ENCODE measurements at regions of chrX and their contacts with region 1.

Region 1: DNA sequence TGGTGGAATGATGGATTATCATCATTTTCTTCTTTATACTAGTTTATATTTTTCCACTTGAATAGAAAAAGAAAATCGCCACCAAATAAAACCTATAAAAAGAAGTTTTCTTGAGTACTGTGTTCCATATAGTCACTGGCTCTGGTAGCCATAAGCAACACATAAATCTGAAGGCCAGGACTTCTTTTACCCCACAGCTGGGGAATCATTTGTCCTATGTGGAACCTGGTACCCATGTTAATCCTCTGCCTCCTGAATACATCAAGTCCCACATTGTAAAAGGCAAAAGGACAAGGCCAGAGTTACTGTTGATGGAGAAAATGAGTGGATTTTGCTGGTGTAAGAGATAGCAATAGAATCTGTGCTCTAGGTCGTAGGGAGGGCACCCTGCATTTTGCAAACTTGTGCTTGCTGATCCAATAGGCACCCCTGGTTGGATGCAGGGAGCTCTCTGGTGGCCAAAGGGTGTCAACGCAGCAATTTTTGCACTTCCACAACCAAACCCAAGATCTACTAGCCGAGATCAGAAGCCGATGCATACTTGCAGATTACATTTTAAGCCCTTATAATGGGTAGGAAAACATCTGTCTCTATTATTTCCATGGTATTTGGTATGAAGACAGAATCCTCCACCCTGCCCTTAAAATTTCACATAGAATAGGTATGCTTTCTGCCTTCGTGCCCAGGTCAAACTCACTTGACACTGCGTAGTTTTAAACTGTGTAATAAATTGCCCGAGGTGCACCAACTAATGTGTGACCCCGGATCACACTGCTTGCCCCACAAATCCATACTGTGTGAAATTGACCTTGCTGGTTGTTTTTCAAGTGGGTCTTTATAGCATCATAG is 146.2 kb upstream of the SCML1 start:
- DNase-seq: peak; percentile 3
- ATAC-seq: peak; percentile 70
- H3K4me3 ChIP-seq: no peak overlapping the region
- H3K27ac ChIP-seq: no peak overlapping the region
- H3K4me1 ChIP-seq: peaks cover 10% of the 10 kb centered on the region; the same call in 1 of the 2 replicates
- H3K27me3 ChIP-seq: no peaks in the 10 kb centered on the region
- CTCF ChIP-seq: peak; percentile 76
- EP300 ChIP-seq: no peak
- POLR2A ChIP-seq: no peak
- RAD21 ChIP-seq: 0 out of 2 replicates have a peak, but pooled peaks have one; percentile 19

Region 2: GRCh38 chrX:17120816-17121215 is 470.3 kb before region 1 on chrX:
- CTCF ChIA-PET with region 1: no interaction called
- POLR2A ChIA-PET with region 1: no interaction called
- in situ Hi-C with region 1: no loop called
- intact Hi-C with region 1: loop called (anchors 5 kb)
- DNase-seq: no peak
- ATAC-seq: no peak
- H3K4me3 ChIP-seq: no peak overlapping the region
- H3K27ac ChIP-seq: no peak overlapping the region
- H3K4me1 ChIP-seq: no peaks in the 10 kb centered on the region
- H3K27me3 ChIP-seq: no peaks in the 10 kb centered on the region
- CTCF ChIP-seq: no peak
- EP300 ChIP-seq: no peak
- POLR2A ChIP-seq: no peak
- RAD21 ChIP-seq: no peak

Region 3: GRCh38 chrX:17242470-17242869 is 348.6 kb before region 1 on chrX:
- CTCF ChIA-PET with region 1: interaction called, 12 read pairs
- POLR2A ChIA-PET with region 1: no interaction called
- in situ Hi-C with region 1: no loop called
- intact Hi-C with region 1: no loop called
- DNase-seq: peak; percentile 10
- ATAC-seq: peak; percentile 50; the same call in 2 of the 3 replicates
- H3K4me3 ChIP-seq: no peak overlapping the region
- H3K27ac ChIP-seq: no peak overlapping the region
- H3K4me1 ChIP-seq: no peaks in the 10 kb centered on the region
- H3K27me3 ChIP-seq: no peaks in the 10 kb centered on the region
- CTCF ChIP-seq: peak; percentile 67
- EP300 ChIP-seq: no peak
- POLR2A ChIP-seq: no peak
- RAD21 ChIP-seq: no peak

Region 4: GRCh38 chrX:17535229-17535628 is 55.9 kb before region 1 on chrX:
- CTCF ChIA-PET with region 1: no interaction called
- POLR2A ChIA-PET with region 1: no interaction called
- in situ Hi-C with region 1: no loop called
- intact Hi-C with region 1: loop called (anchors 1 kb)
- DNase-seq: peak; percentile 18
- ATAC-seq: peak; percentile 59
- H3K4me3 ChIP-seq: no peak overlapping the region
- H3K27ac ChIP-seq: no peak overlapping the region
- H3K4me1 ChIP-seq: no peaks in the 10 kb centered on the region
- H3K27me3 ChIP-seq: no peaks in the 10 kb centered on the region
- CTCF ChIP-seq: peak; percentile 50
- EP300 ChIP-seq: no peak
- POLR2A ChIP-seq: no peak
- RAD21 ChIP-seq: no peak